ENCODE measurements at regions of chr17 and their contacts with region 1.

Region 1: DNA sequence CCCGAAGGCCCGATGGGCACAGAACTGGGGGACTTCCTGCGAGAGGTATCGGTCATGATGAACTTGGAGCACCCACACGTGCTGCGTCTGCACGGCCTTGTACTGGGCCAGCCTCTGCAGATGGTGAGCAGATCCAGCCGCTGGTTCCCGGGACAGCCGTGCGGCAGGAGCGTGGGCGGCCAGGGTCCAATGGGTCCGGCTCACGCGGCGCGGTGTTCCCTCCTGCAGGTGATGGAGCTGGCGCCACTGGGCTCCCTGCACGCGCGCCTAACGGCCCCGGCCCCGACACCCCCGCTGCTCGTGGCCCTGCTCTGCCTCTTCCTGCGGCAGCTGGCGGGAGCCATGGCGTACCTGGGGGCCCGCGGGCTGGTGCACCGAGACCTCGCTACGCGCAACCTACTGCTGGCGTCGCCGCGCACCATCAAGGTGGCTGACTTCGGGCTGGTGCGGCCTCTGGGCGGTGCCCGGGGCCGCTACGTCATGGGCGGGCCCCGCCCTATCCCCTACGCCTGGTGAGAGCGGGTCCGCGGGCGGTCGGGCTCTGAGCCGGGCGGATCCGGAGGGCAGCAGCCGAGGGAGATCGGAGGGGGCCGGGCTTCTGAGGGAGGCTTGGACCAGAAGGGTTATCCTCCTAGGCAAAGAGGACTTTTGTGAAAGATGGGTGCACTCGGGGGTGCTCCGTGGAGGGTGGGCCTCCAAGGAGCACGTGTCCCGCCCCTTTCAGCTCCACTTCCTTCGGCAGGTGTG is 3.0 kb downstream of the TNK1 start:
- DNase-seq: peak; percentile 63 to 93 (median 77)
- ATAC-seq: peak; percentile 94
- H3K4me3 ChIP-seq: peak overlapping the region; percentile 64
- H3K4me3 Mint-ChIP-seq: peak overlapping the region; percentile 87
- H3K27ac ChIP-seq: peak overlapping the region; percentile 74 to 77
- H3K27ac Mint-ChIP-seq: peak overlapping the region; percentile 91
- H3K4me1 ChIP-seq: peaks cover 28% of the 10 kb centered on the region
- H3K4me1 Mint-ChIP-seq: peaks cover 10% of the 10 kb centered on the region
- H3K27me3 ChIP-seq: peaks cover 21 to 22% of the 10 kb centered on the region in 2 experiments
- H3K27me3 Mint-ChIP-seq: peaks cover 41% of the 10 kb centered on the region
- CTCF ChIP-seq: no peak

Region 2: DNA sequence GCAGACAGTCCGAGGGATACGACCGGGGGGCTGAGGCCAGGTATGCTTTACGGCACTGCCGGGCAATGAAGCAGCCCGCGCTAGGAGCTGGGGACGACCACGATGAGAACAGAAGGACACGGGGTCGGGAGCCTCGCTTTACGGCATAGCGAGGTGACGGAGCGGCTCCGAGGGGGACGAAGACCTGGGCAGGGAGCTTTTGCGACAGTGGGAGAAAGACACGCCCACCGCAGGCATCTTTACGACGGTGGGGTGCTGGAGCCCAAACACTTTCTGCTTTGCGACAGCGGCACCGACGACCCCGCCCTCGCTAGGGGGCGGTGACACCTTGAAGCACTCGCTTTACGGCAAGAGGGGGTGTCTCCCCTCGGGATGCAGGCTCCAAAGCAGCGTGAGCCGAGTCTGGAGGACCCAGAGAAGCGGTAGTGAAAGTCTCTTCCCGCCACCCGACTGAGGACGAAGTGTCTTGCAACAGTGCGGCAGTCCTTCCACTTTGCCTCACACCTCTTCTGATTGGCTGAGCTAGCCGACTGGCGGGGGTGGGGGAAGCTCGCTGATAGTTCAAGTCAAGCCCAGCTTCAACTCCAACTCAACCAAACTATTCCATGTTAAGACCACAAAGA is 54.4 kb before region 1 on chr17:
- CTCF ChIA-PET with region 1: no interaction called
- POLR2A ChIA-PET with region 1: interaction called, 11 read pairs
- intact Hi-C with region 1: no loop called
- DNase-seq: peak; percentile 90 to 99 (median 94)
- ATAC-seq: peak; percentile 73
- H3K4me3 ChIP-seq: peak overlapping the region; percentile 64
- H3K4me3 Mint-ChIP-seq: peak overlapping the region; percentile 90
- H3K27ac ChIP-seq: peak overlapping the region; percentile 80 to 92
- H3K27ac Mint-ChIP-seq: peak overlapping the region; percentile 88
- H3K4me1 ChIP-seq: peaks cover 58% of the 10 kb centered on the region
- H3K4me1 Mint-ChIP-seq: peaks cover 47% of the 10 kb centered on the region
- H3K27me3 ChIP-seq: no peaks in the 10 kb centered on the region
- H3K27me3 Mint-ChIP-seq: no peaks in the 10 kb centered on the region
- CTCF ChIP-seq: no peak

Region 3: DNA sequence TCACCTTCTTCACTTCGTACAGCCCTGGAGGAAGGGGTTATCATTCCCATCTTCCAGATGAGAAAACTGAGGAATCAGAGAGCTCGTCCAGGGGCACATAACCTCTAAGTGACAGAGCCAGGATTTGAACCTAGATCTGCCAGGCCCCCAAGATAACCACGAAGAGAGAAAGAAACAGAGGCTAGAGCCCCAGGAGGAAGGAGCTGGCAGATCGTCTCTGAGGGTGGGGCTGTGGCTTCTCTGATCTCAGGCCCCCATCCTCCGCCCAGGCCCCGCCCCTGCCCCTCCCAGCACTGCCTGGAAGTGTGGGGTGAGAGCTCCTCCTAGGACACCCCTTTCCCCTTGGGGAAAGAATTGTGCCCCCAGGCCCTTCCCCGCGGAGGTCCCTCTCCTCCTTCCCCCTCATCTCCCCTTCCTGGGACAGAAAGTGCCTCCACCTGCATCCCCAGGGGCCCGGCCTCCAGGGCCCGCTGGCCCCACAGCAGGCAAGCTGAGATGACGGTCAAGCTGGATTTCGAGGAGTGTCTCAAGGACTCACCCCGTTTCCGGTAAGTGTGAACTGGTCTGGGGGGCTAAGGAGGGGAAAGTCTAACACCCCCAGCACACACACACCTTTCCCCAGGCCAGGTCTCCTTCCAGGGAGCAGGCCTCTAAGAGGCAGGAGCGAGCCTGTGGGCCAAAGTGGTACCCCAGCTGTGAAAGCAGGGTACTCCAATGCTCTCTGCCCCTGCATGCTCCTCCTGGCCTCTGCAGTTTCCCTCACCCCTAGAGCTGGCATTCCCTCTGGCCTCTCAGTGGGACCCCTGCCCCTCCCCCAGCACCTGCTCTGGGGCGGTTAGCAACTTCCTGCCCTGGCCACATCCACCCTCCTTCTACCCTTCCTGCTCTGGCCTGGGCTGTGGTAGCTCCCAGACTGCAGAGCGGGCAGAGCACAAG is 47.4 kb before region 1 on chr17 and contains the start of gene ACAP1:
- CTCF ChIA-PET with region 1: no interaction called
- POLR2A ChIA-PET with region 1: interaction called, 12 read pairs
- intact Hi-C with region 1: no loop called
- DNase-seq: peak; percentile 75 to 95 (median 90)
- ATAC-seq: peak; percentile 96
- H3K4me3 ChIP-seq: peak within 1 kb of the TSS; percentile 91
- H3K4me3 Mint-ChIP-seq: peak within 1 kb of the TSS; percentile 89
- H3K27ac ChIP-seq: peak within 1 kb of the TSS; percentile 55 to 64
- H3K27ac Mint-ChIP-seq: peak within 1 kb of the TSS; percentile 91
- H3K4me1 ChIP-seq: peaks cover 88% of the 10 kb centered on the region
- H3K4me1 Mint-ChIP-seq: peaks cover 52% of the 10 kb centered on the region
- H3K27me3 ChIP-seq: no peaks in the 10 kb centered on the region
- H3K27me3 Mint-ChIP-seq: no peaks in the 10 kb centered on the region
- CTCF ChIP-seq: no peak
- total RNA-seq, gene ACAP1: 565 to 575 TPM

Region 4: GRCh38 chr17:7394452-7395191 is 10.7 kb after region 1 on chr17 and contains the start of gene PLSCR3:
- CTCF ChIA-PET with region 1: interaction called, 8 read pairs
- POLR2A ChIA-PET with region 1: interaction called, 31 read pairs
- intact Hi-C with region 1: loop called in 1 of 2 experiments (anchors 1 kb)
- DNase-seq: peak; percentile 56 to 90 (median 80)
- ATAC-seq: peak; percentile 87
- H3K4me3 ChIP-seq: peak within 1 kb of the TSS; percentile 82
- H3K4me3 Mint-ChIP-seq: peak within 1 kb of the TSS; percentile 96
- H3K27ac ChIP-seq: peak within 1 kb of the TSS; percentile 68 to 79
- H3K27ac Mint-ChIP-seq: peak within 1 kb of the TSS; percentile 94
- H3K4me1 ChIP-seq: peaks cover 48% of the 10 kb centered on the region
- H3K4me1 Mint-ChIP-seq: peaks cover 37% of the 10 kb centered on the region
- H3K27me3 ChIP-seq: no peaks in the 10 kb centered on the region
- H3K27me3 Mint-ChIP-seq: no peaks in the 10 kb centered on the region
- CTCF ChIP-seq: peak; percentile 20
- total RNA-seq, gene PLSCR3: 66.3 to 70.3 TPM

Region 5: DNA sequence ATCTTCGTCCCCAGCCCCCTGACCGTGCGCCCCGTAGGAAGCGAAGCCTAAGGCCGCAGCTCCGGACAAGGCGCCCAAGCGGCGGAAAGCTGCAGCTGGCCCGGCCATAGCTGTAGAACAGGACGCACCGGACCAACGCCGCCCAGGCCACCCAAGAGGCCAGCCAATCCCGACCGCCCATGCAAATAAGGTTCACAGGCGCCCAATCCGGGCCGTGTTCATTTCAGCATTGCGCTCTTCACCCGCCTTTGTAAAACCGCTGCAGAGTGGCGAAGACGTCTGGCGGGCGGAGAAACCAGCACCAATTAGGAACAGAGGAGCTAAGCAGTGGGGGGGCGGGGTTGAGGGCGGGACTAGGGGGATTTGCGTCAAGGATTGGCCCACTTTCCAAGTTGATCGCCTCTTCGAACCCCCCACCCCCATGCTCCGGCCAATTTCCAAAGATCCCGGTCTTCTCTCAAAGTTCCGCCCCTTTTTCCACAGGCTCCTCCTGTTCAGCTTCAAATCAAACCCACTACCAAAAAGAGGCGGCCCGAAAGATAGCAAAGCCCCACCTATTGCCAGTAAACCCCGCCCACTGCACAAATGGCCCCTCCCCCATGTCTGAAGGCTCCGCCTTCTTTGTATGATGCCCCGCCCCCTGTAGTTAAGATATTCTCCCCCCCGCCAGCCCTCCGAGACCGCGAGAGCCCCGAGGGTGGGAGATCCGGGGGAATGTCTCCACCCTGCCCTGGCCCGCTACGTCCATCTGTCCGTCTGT is 20.2 kb after region 1 on chr17 and contains the start of gene TMEM256:
- CTCF ChIA-PET with region 1: interaction called, 6 read pairs
- POLR2A ChIA-PET with region 1: interaction called, 37 read pairs
- intact Hi-C with region 1: no loop called
- DNase-seq: peak; percentile 90 to 99 (median 94)
- ATAC-seq: peak; percentile 88
- H3K4me3 ChIP-seq: peak within 1 kb of the TSS; percentile 77
- H3K4me3 Mint-ChIP-seq: peak within 1 kb of the TSS; percentile 98
- H3K27ac ChIP-seq: peak within 1 kb of the TSS in 1 of 2 donors; percentile 82
- H3K27ac Mint-ChIP-seq: peak within 1 kb of the TSS; percentile 87
- H3K4me1 ChIP-seq: peaks cover 36% of the 10 kb centered on the region
- H3K4me1 Mint-ChIP-seq: peaks cover 31% of the 10 kb centered on the region
- H3K27me3 ChIP-seq: peaks cover 0 to 5% of the 10 kb centered on the region in 2 experiments
- H3K27me3 Mint-ChIP-seq: no peaks in the 10 kb centered on the region
- CTCF ChIP-seq: no peak
- total RNA-seq, gene TMEM256: 29.0 to 29.4 TPM

Region 6: GRCh38 chr17:7523033-7523432 is 139.1 kb after region 1 on chr17:
- CTCF ChIA-PET with region 1: no interaction called
- POLR2A ChIA-PET with region 1: no interaction called
- intact Hi-C with region 1: no loop called
- DNase-seq: peak in 13 of 14 experiments; percentile 21 to 76 (median 43)
- ATAC-seq: peak; percentile 49
- H3K4me3 ChIP-seq: no peak overlapping the region
- H3K4me3 Mint-ChIP-seq: no peak overlapping the region
- H3K27ac ChIP-seq: no peak overlapping the region
- H3K27ac Mint-ChIP-seq: no peak overlapping the region
- H3K4me1 ChIP-seq: no peaks in the 10 kb centered on the region
- H3K4me1 Mint-ChIP-seq: peaks cover 5% of the 10 kb centered on the region
- H3K27me3 ChIP-seq: no peaks in the 10 kb centered on the region
- H3K27me3 Mint-ChIP-seq: no peaks in the 10 kb centered on the region
- CTCF ChIP-seq: peak; percentile 59

Measured in CD4-positive, alpha-beta T cell (primary cell).